B cell (primary cell): ENCODE measurements at regions of chr2 and their contacts with region 1.

Region 1: GRCh38 chr2:104866883-104867812 is 13.2 kb downstream of the POU3F3 start:
- DNase-seq: peak; percentile 22
- ATAC-seq: no peak
- H3K4me3 ChIP-seq: no peak overlapping the region
- H3K4me3 Mint-ChIP-seq: no peak overlapping the region
- H3K27ac ChIP-seq: no peak overlapping the region
- H3K27ac Mint-ChIP-seq: no peak overlapping the region
- H3K4me1 ChIP-seq: peaks cover 33 to 37% of the 10 kb centered on the region in 2 donors
- H3K4me1 Mint-ChIP-seq: peaks cover 18% of the 10 kb centered on the region
- H3K27me3 ChIP-seq: peaks cover 0 to 96% (median 73%) of the 10 kb centered on the region in 4 experiments
- H3K27me3 Mint-ChIP-seq: peaks cover 66% of the 10 kb centered on the region
- CTCF ChIP-seq: no peak

Region 2: DNA sequence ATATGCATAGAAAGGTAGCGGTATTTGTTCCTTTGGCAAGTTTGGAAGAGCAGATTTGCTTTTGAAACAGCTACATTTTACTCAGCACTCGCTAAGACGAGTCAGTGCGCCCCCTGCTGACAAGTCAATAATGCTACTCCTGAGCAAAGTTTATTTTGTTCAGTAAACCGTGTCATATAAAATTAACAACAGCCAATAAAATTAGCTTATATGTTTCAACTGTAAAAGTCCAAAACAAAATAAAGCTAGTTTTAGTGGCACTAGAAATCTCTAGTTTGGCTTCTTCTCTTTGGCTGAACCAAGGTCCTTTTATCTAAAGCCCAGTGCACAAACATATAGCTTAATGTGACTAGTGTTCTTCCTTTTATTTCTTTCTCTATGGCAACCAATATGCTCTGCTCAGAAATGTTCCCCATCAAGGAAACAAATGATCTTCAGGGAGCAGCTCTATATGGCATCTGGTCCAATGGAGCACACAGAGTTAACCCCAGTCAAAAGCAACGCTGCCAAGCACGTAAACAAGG is 17.5 kb before region 1 on chr2:
- CTCF ChIA-PET with region 1: interaction called, 12 read pairs
- POLR2A ChIA-PET with region 1: interaction called, 4 read pairs
- intact Hi-C with region 1: loop called (anchors 2 kb)
- DNase-seq: peak; percentile 62
- ATAC-seq: no peak
- H3K4me3 ChIP-seq: no peak overlapping the region
- H3K4me3 Mint-ChIP-seq: no peak overlapping the region
- H3K27ac ChIP-seq: no peak overlapping the region
- H3K27ac Mint-ChIP-seq: no peak overlapping the region
- H3K4me1 ChIP-seq: peaks cover 39 to 59% of the 10 kb centered on the region in 2 donors
- H3K4me1 Mint-ChIP-seq: peaks cover 38% of the 10 kb centered on the region
- H3K27me3 ChIP-seq: peaks cover 0 to 94% (median 84%) of the 10 kb centered on the region in 4 experiments
- H3K27me3 Mint-ChIP-seq: peaks cover 87% of the 10 kb centered on the region
- CTCF ChIP-seq: peak; percentile 82